MCF 10A (cell line): ENCODE measurements at regions of chr1 and their contacts with region 1.

Region 1: GRCh38 chr1:111507411-111508201 is 4.2 kb upstream of the ADORA3 start:
- DNase-seq: peak; percentile 55
- H3K4me3 Mint-ChIP-seq: peak overlapping the region; percentile 56
- H3K27ac Mint-ChIP-seq: no peak overlapping the region
- H3K4me1 Mint-ChIP-seq: peaks cover 10% of the 10 kb centered on the region
- H3K27me3 Mint-ChIP-seq: no peaks in the 10 kb centered on the region
- CTCF ChIP-seq: no peak

Region 2: DNA sequence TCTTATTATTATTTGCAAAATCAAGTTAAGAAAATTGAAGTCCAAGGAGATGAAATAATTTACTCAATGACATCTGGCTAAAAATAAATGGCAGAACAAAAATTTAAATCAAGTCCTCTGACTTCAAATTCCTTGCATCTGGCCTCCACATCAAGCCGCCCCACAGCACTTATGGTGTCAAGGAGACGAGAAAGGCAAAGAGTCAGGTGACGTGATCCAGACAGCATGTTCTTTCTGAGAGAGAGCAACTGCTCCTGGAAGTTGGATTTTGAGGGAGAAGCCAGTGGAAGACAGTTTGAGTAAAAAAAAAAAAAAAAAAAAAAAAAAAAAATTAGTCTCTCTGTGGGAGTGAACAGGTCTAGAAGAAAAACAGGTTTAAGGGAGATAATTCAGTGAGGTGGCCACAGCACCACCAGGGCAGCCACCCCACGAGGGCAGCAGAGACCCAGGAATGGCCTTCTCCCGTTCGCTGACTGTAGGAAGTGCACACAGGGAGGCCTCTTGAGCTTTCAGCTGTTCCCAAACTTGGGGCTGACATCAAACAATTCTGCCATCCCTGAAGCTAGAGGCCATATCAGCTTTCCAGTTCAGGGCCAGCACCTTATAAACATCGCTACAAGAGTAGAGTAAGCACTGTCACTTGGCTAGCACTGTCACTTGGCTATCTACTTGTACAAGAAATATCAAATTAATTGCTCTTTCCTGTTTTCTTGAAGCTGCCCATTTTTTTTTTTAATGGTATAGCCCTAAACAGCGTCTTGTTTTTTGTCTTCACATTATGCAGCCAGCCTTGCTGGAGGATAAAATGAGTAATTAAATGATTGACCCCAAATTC is 26.0 kb before region 1 on chr1:
- CTCF ChIA-PET with region 1: interaction called, 11 read pairs
- POLR2A ChIA-PET with region 1: no interaction called
- intact Hi-C with region 1: no loop called
- DNase-seq: peak; percentile 64
- H3K4me3 Mint-ChIP-seq: no peak overlapping the region
- H3K27ac Mint-ChIP-seq: no peak overlapping the region
- H3K4me1 Mint-ChIP-seq: no peaks in the 10 kb centered on the region
- H3K27me3 Mint-ChIP-seq: no peaks in the 10 kb centered on the region
- CTCF ChIP-seq: peak; percentile 58

Region 3: DNA sequence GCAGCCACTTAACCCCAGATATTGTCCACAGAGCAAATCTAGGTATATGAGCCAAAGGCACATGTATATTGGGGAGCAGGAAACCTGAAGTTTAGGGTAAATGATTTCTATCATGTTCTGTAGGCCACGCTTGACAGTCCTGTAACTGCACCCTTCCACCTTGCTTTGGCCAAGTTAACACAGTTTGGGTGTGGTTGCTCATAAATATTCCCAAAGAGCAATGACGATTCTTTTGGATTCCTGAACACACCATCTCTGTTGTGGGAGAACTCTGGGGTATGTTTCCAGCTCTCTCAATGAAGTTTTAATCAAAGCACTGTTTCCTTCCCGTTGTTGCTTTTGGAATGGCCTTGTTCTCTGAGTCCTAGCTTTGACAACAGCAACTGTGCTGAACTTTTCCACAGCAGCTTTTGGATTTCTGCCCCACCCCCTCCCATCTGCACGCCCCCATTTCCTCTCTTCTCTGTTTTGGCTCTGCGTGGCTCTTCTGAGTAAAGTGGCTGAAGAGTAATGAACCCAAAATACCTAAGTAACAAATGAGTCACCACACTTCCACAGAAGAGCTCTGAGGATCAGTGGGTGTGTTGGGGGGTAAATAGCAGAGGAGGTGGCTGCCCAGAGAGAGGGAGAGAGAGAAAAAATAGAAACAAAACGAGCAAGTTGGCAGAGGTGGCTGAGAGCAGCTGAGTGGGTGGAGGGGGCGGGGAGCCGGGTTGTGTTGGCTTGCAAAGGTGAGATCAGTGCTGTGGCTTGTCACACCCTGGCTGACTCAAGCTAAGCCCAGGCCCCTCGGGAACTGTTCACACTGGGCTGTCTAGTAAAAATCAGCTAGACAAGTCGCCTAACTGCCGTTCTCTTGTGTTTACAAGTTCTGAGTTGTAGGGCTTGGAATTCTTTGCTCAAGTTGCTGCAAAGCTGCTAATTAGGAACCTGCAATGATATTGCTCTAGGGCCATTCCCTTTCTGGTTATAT is 85.1 kb after region 1 on chr1:
- CTCF ChIA-PET with region 1: interaction called, 22 read pairs
- POLR2A ChIA-PET with region 1: interaction called, 8 read pairs
- intact Hi-C with region 1: no loop called
- DNase-seq: peak; percentile 82
- H3K4me3 Mint-ChIP-seq: peak overlapping the region; percentile 39
- H3K27ac Mint-ChIP-seq: peak overlapping the region; percentile 21
- H3K4me1 Mint-ChIP-seq: peaks cover 11% of the 10 kb centered on the region
- H3K27me3 Mint-ChIP-seq: no peaks in the 10 kb centered on the region
- CTCF ChIP-seq: no peak

Region 4: DNA sequence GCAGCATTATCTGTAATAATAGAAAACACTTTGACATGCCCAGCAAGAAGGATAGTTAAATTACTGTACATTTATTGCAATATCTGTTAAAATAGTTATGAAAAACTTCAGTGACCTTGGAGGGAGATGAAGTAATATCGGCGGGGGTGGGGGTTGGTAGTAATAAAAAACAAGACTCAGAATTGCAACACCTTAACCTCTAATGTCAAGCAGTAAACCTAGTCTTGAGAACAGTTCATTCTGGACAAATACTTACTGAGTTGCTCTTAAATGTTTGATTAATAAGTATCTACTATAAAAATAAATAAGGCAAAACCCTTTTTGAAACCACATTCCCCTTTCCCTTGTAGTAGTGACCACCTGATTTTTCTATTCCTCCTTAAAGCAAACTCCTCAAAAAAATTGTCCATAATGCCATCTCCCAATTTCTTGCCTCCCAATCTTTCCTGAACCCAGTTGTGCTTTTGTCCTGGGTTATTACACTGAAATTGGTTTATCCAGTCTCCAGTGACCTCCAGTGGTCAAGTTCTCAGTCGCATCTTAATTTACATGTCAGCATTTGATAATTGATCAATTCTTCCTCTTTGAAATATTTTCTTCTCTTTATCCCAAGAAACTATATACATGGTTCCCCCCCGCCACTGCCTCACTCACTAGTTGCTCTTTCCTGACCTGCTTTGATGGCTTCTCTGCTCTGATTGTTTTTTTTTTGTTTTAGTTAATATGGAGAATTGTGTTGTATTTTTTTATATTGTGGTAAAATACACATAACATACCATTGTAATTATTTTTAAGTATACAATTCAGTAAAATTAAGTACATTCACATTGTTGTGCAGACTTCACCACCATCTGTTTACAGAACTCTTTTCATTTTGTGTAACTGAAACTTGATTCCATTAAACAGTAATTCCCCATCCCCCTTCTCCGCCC is 148.7 kb after region 1 on chr1:
- CTCF ChIA-PET with region 1: interaction called, 52 read pairs
- POLR2A ChIA-PET with region 1: interaction called, 5 read pairs
- intact Hi-C with region 1: loop called (anchors 1 kb)
- DNase-seq: peak; percentile 63
- H3K4me3 Mint-ChIP-seq: no peak overlapping the region
- H3K27ac Mint-ChIP-seq: peak overlapping the region; percentile 3
- H3K4me1 Mint-ChIP-seq: peaks cover 9% of the 10 kb centered on the region
- H3K27me3 Mint-ChIP-seq: no peaks in the 10 kb centered on the region
- CTCF ChIP-seq: peak; percentile 57

Region 5: DNA sequence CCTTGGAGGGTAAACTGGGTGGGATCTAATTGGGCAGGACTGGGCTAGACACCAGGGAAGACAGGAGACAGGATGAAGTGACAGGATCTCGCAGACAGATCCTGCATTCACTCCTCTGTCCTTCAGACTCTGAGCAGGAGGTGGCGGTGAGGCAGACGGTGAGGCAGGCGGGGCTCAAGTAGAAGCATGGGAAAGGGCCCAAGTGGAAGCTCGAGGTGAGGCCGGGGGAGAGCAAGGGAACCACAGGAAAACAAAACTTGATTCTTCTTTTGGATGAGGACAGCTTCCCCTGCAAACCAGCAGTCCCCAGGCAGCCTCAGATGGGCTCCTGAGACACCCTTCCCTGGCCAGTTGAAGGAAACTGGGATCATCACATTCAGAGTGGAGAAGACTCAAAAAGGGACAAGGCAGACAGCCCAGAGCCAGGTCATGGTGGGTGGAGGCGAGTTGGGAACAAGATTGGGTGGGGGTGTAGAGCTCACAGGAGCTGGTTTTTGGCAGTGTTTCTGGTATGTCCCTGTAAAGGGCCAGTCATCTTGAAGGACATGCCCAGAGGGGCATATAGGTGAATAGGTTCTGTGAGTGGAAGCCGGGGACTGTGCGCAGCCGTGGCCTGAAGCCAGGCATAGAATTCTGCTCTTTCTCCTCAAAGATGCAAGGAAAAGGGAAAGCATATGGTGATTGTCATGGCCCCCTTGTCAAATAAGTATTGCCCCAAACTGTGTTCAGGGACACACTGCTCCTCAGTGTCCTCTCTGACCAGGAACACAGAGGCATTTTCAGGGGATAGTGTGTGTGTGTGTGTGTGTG is 213.6 kb after region 1 on chr1:
- CTCF ChIA-PET with region 1: interaction called, 31 read pairs
- POLR2A ChIA-PET with region 1: no interaction called
- intact Hi-C with region 1: no loop called
- DNase-seq: peak; percentile 78
- H3K4me3 Mint-ChIP-seq: peak overlapping the region; percentile 1
- H3K27ac Mint-ChIP-seq: peak overlapping the region; percentile 17
- H3K4me1 Mint-ChIP-seq: peaks cover 32% of the 10 kb centered on the region
- H3K27me3 Mint-ChIP-seq: no peaks in the 10 kb centered on the region
- CTCF ChIP-seq: no peak

Region 6: DNA sequence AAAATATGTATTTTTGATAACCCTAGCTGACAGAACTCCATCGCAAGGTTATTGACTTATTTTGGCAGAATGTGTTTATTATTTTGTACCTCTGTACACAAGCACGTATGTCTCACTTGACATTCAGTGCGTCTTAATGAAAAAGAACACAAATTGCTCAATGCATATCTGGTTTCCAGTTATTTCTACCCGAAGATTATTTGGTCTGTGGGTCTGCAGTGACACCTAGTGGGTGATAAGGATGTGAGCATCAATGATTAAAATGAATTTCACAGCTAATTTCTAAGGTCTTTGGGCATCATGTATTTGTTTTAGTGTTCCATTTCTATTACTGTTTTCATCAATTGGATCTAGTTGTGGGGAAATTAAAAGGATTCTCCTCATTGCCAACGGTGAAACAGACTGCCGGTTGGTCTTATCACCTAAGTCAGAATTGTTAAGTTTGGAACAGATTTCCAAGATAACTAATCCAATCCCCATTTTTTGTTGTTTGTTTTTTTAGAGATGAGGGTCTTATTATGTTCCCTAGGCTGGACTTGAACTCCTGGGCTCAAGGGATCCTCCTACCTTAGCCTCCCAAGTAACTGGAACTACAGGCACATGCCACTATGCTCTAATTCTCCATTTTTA is 262.0 kb after region 1 on chr1:
- CTCF ChIA-PET with region 1: interaction called, 58 read pairs
- POLR2A ChIA-PET with region 1: interaction called, 5 read pairs
- intact Hi-C with region 1: loop called (anchors 1 kb)
- DNase-seq: peak; percentile 84
- H3K4me3 Mint-ChIP-seq: no peak overlapping the region
- H3K27ac Mint-ChIP-seq: no peak overlapping the region
- H3K4me1 Mint-ChIP-seq: no peaks in the 10 kb centered on the region
- H3K27me3 Mint-ChIP-seq: no peaks in the 10 kb centered on the region
- CTCF ChIP-seq: peak; percentile 81

Region 7: DNA sequence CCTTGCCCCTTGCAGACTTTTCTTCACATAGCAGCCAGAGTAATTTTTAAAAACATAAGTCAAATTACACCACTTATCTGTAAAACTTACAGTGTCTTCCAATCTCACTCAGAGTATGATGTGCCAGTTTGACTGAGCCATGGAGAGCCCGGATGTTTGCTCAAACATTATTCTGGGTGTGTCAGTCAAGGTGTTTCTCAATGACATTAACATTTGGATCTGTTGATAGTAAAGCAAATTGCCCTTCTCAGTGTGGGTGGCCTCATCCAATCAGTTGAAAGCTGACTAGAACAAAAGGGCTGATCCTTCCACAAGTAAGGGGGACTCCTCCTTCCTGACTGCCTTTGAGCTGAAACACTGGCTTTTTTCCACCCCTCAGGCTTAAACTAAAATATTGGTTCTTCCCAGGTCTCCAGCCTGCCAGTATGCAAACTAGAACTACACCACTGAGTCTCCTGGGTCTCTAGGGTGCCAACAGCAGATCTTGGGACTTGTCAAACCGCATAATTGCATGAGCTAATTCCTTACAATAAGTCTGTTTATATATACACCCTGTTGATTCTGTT is 730.5 kb after region 1 on chr1:
- CTCF ChIA-PET with region 1: no interaction called
- POLR2A ChIA-PET with region 1: no interaction called
- intact Hi-C with region 1: no loop called
- DNase-seq: no peak
- H3K4me3 Mint-ChIP-seq: no peak overlapping the region
- H3K27ac Mint-ChIP-seq: no peak overlapping the region
- H3K4me1 Mint-ChIP-seq: peaks cover 11% of the 10 kb centered on the region
- H3K27me3 Mint-ChIP-seq: peaks cover 61% of the 10 kb centered on the region
- CTCF ChIP-seq: no peak